Activated CD4-positive, alpha-beta T cell treated with anti-CD3 and anti-CD28 coated beads for 36 hours (primary cell): ENCODE measurements at regions of chr14 and their contacts with region 1.

Region 1: GRCh38 chr14:67695394-67695949 is at the start of gene RDH11:
- DNase-seq: peak; percentile 92
- ATAC-seq: peak; percentile 88
- H3K4me3 Mint-ChIP-seq: peak within 1 kb of the TSS; percentile 91
- H3K27ac Mint-ChIP-seq: peak within 1 kb of the TSS; percentile 98
- H3K4me1 Mint-ChIP-seq: peaks cover 21% of the 10 kb centered on the region
- H3K27me3 Mint-ChIP-seq: no peaks in the 10 kb centered on the region
- total RNA-seq, gene RDH11: 72.0 to 75.6 TPM

Region 2: DNA sequence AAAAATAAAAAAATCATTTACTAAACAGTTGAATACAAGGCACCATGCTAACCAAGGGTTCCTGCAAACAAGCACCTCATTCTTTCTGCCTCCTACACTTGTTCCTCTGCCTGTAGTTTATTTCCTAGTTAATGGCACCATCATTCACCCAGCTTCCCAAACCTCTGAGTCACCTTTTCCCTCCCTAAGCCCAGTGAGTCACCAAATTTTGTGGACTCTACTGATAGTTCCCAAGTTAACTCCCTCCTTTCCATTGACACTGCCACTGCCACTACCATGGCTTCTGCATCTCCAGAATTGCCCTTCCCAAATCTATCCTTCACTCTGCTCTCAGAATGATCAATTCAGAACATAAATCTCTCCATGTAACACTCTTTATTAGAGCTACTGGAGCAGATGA is 508.3 kb before region 1 on chr14:
- CTCF ChIA-PET with region 1: no interaction called
- POLR2A ChIA-PET with region 1: interaction called, 10 read pairs
- intact Hi-C with region 1: no loop called
- DNase-seq: no peak
- ATAC-seq: no peak
- H3K4me3 Mint-ChIP-seq: no peak overlapping the region
- H3K27ac Mint-ChIP-seq: no peak overlapping the region
- H3K4me1 Mint-ChIP-seq: peaks cover 20% of the 10 kb centered on the region
- H3K27me3 Mint-ChIP-seq: no peaks in the 10 kb centered on the region

Region 3: GRCh38 chr14:67619446-67620216 is 75.8 kb before region 1 on chr14 and contains the start of gene ARG2:
- CTCF ChIA-PET with region 1: interaction called, 8 read pairs
- POLR2A ChIA-PET with region 1: no interaction called
- intact Hi-C with region 1: loop called (anchors 1 to 2 kb)
- DNase-seq: peak; percentile 99
- ATAC-seq: peak; percentile 88
- H3K4me3 Mint-ChIP-seq: peak within 1 kb of the TSS; percentile 77
- H3K27ac Mint-ChIP-seq: peak within 1 kb of the TSS; percentile 73
- H3K4me1 Mint-ChIP-seq: peaks cover 31% of the 10 kb centered on the region
- H3K27me3 Mint-ChIP-seq: peaks cover 8% of the 10 kb centered on the region
- total RNA-seq, gene ARG2: 11.9 TPM

Region 4: GRCh38 chr14:67674481-67675169 is 20.8 kb before region 1 on chr14 and contains the start of gene VTI1B:
- CTCF ChIA-PET with region 1: interaction called, 12 read pairs
- POLR2A ChIA-PET with region 1: interaction called, 6 read pairs
- intact Hi-C with region 1: loop called (anchors 1 kb)
- DNase-seq: peak; percentile 83
- ATAC-seq: peak; percentile 94
- H3K4me3 Mint-ChIP-seq: peak within 1 kb of the TSS; percentile 81
- H3K27ac Mint-ChIP-seq: peak within 1 kb of the TSS; percentile 82
- H3K4me1 Mint-ChIP-seq: peaks cover 32% of the 10 kb centered on the region
- H3K27me3 Mint-ChIP-seq: no peaks in the 10 kb centered on the region
- total RNA-seq, gene VTI1B: 42.0 to 58.3 TPM

Region 5: DNA sequence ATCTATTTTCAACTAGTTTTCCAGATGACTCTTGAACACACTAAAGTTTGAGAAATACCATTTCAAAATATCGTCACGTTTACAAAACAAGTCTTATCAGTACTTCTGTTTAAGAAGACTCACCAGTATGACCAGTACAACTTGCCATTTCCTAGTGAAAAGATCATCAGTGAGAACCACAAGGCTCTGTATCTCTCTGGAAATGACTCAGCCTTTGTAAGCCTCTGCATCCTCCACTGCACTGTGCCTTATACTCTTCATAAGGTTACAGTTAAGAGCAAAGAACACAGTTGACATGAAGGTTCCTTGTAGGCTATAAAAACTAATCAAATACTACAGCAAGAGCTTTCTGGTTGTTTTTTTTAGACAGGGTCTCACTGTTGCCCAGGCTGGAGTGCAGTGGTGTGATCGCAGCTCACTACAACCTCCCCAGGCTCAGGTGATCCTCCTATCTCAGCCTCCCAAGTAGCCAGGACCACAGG is 15.3 kb before region 1 on chr14:
- CTCF ChIA-PET with region 1: interaction called, 5 read pairs
- POLR2A ChIA-PET with region 1: interaction called, 5 read pairs
- intact Hi-C with region 1: loop called in 1 of 2 experiments (anchors 1 kb)
- DNase-seq: peak; percentile 37
- ATAC-seq: peak; percentile 99
- H3K4me3 Mint-ChIP-seq: no peak overlapping the region
- H3K27ac Mint-ChIP-seq: peak overlapping the region; percentile 31
- H3K4me1 Mint-ChIP-seq: peaks cover 46% of the 10 kb centered on the region
- H3K27me3 Mint-ChIP-seq: no peaks in the 10 kb centered on the region